GM10248 (cell line): ENCODE measurements at regions of chr4 and their contacts with region 1.

Region 1: DNA sequence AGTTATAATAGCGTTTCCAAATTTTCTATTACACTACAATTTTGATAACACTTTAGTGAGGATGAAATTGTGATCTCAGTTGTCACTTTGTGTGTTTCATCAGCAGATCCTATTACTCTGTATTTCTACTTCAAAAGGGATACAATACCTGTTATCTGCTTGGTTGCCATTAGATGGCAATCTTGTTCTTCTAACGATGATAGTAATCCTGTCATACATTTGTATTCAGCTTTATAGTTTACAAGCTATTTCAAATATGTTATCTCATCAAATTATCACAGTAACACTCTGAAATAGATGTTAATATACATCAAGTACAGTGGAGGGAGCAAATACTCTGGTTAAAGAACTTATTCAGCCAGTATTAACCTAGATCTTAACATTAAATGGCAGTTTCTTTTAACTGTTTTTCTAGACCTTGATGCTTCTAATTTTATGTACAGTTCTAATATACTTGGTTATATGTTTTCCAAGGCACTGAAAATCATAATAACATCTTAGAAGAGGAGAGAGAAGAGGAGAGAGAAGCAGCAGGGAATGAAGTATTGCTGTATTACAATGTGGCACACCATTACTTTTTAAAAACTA is 292.0 kb downstream of the CCSER1 start:
- DNase-seq: peak; percentile 36
- CTCF ChIP-seq: peak; percentile 53

Region 2: DNA sequence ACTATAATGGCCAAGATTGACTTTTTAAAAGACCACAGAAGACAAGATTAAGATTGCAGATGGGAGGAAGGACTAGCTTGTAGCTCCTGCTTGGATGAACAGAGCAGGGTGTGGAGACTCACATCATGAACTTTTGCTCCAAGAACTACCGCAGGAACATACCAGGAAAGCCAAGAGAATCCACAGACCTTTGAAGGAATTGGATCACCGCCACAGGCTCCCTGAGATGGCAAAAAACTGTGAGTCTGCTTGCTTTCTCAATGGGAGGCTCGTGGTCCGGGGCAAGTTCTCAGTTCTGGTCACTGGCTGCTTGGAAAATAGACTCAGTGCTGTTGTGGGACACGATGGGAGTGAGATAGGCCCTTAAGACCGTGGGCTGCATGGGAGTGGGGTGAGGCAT is 15.4 kb before region 1 on chr4:
- CTCF ChIA-PET with region 1: interaction called, 10 read pairs
- POLR2A ChIA-PET with region 1: no interaction called
- DNase-seq: no peak
- CTCF ChIP-seq: no peak

Region 3: GRCh38 chr4:90769251-90769650 is 350.0 kb after region 1 on chr4:
- CTCF ChIA-PET with region 1: no interaction called
- POLR2A ChIA-PET with region 1: no interaction called
- DNase-seq: no peak
- CTCF ChIP-seq: no peak

Region 4: DNA sequence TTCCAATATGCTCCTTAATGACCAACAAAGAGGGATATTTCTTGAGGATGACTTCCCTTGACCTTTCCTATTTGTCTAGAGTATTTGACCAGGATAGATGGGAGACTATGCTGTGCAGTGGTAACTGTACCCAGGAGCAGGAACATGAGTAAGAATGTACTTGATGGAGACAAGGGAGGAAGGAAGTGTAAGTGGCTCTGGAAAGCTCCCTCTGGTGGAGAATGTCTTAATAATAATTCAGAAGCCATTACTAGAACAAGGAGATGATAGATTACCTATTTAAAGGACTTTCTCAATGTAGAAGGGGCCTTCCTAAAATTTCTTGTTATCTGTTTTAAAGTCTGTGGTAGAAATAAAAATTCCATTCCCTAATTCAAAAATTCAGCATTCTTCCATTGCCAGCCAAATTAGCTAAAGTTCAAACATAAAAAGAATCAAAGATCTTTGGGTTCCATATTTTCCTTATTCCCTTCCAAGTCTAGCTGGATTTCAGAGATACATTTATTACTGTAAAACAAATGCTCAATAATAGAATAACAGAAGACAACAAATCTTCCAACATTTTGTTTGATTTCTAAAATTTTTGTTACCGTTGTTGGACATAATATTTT is 1968.3 kb after region 1 on chr4:
- CTCF ChIA-PET with region 1: interaction called, 12 read pairs
- POLR2A ChIA-PET with region 1: no interaction called
- DNase-seq: peak; percentile 14
- CTCF ChIP-seq: peak; percentile 42